AG04449 (cell line): ENCODE measurements at regions of chr5 and their contacts with region 1.

Region 1: GRCh38 chr5:147558826-147559225 is 49.0 kb upstream of the DPYSL3 start:
- DNase-seq: no peak
- H3K4me3 ChIP-seq: no peak overlapping the region
- CTCF ChIP-seq: peak; percentile 69

Region 2: DNA sequence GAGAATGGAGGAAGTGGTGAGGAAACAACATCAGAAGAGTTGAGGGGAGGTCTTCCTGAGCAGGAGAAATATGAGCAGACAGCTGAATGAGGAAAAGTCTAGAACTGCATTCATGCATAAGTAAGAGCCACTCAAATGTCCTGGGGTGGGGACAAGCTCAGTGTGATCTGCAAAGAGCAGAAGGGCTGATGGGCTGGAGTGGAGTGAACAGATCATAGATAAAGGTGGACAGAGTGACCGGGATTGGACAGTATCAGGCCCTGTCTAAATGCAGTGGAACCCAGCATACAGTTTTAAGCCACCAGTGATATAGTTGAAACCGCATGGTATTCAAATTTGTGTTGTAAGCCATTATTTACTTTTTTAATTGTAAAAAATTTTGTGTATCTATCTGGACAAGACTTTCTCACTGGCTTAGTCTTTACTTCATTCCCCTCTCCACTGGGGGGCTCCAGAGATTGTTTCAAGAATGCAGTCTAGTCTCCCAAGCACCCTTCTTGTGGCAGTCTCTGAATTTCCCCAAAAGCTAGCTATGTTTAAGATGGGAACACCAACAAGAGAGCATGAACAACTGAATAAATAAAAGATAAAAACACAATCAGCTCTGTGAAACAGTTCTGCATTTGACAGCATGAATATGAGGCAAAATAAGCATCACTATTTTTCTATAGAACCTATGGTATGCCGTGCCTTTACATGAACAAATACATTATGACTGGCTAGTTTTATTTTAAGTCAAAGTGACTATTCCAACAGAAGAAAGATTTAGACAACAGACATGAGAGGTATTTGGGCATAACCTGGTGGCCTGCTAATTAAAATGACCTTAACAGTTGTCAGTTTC is 334.7 kb before region 1 on chr5:
- CTCF ChIA-PET with region 1: interaction called, 31 read pairs
- POLR2A ChIA-PET with region 1: no interaction called
- DNase-seq: peak; percentile 7
- H3K4me3 ChIP-seq: no peak overlapping the region
- CTCF ChIP-seq: peak; percentile 52

Region 3: GRCh38 chr5:147391781-147392180 is 167.0 kb before region 1 on chr5:
- CTCF ChIA-PET with region 1: interaction called, 91 read pairs
- POLR2A ChIA-PET with region 1: interaction called, 4 read pairs
- DNase-seq: peak; percentile 21
- H3K4me3 ChIP-seq: no peak overlapping the region
- CTCF ChIP-seq: peak; percentile 67

Region 4: GRCh38 chr5:147427521-147428401 is 131.1 kb before region 1 on chr5:
- CTCF ChIA-PET with region 1: interaction called, 21 read pairs
- POLR2A ChIA-PET with region 1: no interaction called
- DNase-seq: no peak
- H3K4me3 ChIP-seq: no peak overlapping the region
- CTCF ChIP-seq: no peak

Region 5: DNA sequence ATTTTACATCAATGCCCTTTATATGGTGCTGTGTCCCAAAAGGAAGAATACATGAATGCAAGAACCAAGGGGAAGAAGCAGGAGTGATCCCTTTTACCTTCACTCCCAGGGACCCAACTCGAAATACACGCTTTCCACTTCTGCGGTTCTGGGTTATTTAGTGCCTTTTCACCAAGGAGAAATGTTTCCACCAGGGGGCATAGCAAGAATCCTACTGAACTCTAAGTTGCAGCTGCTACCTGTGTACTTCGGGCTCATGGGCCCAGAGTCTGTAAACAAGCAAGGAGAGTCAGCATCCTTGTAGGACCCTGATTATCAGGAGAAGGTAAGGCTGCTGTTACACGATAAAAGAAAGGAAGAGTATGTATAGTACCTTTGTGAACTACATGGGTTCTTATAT is 94.6 kb before region 1 on chr5:
- CTCF ChIA-PET with region 1: interaction called, 60 read pairs
- POLR2A ChIA-PET with region 1: no interaction called
- DNase-seq: no peak
- H3K4me3 ChIP-seq: no peak overlapping the region
- CTCF ChIP-seq: peak; percentile 37

Region 6: DNA sequence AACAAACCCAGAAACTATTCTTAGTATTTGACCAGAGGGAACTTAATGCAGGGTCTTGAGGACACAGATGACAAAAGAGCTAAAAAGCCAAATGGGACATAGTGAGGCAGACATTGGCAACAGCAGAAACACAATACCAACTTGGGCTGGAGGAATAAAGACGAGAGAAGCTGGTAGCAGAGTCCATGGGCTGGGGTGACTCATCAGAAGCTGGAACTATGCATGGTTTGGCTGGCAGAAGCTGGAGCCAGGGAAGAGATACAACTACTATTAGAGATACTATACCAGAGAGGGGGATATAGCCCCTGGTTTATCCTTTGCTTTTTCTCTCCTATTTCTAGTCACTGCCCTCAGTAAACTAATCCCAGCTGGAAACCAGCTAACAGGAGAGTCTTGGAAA is 19.8 kb before region 1 on chr5:
- CTCF ChIA-PET with region 1: interaction called, 43 read pairs
- POLR2A ChIA-PET with region 1: interaction called, 6 read pairs
- DNase-seq: no peak
- H3K4me3 ChIP-seq: no peak overlapping the region
- CTCF ChIP-seq: no peak

Region 7: GRCh38 chr5:147576646-147577535 is 18.1 kb after region 1 on chr5:
- CTCF ChIA-PET with region 1: interaction called, 45 read pairs
- POLR2A ChIA-PET with region 1: no interaction called
- DNase-seq: no peak
- H3K4me3 ChIP-seq: no peak overlapping the region
- CTCF ChIP-seq: peak; percentile 81

Region 8: DNA sequence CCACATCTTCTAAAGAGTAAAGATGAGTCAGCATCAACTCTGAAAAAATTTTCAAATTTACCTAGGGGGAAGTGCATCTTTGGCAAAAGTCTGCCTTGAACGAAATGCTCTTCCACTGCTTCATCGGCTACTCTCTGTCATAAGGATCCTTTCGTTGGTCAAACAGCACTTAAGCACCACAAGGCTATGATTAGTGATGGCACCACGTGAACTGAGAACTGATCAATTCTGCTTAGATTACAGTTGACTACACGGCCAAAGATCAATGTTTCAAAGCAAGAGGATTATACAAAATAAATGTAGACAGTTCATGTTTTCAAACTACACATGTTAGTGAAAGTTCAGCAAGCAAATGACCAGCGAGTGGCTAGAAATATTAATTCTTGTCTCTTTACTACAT is 214.3 kb after region 1 on chr5:
- CTCF ChIA-PET with region 1: no interaction called
- POLR2A ChIA-PET with region 1: no interaction called
- DNase-seq: no peak
- H3K4me3 ChIP-seq: no peak overlapping the region
- CTCF ChIP-seq: no peak